HepG2 (cell line): ENCODE measurements at regions of chr6 and their contacts with region 1.

Region 1: DNA sequence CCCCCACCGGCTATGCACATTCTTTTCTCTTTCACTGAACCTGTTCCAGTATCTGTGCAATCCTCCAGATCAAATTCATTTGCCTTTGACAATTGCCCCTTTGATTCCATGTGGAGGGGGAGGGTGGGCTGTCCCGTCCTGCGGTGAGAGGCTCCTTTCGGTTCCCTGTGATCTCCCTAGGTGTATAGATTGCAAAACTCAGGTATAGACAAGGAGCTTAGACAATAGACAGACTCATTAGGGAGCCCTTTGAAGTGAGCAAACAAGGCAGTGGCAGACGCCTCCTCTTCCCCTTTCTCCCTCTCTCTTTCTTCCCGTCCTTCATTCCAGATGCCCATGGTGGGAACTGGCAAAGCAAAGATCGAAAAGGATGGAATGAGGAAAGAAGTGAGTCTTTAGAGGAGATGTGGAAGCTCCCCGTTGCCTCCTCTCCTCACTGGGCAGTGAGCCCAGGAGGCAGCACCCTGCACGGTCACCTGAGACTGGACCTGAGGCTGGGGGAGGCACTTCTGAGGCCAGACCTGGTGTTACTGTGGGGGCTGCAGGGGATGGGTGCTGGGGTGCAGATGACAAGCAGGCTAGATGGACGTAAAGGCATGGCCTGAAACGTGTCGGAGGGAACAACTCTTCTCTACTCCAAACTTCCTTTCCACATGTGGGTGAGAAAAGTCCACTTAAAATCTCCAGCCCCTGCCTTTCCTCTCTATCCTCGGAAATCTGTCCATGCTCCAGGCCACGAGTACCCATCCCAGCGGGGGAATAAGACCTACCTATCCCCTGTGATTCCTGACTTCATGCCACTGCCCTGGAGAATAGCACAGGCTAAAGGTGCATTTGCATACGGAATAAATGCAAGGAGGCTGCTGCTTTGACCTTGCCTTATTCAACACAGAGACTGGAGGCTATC is 256.6 kb upstream of the FOXQ1 start:
- DNase-seq: peak; percentile 100
- ATAC-seq: peak; percentile 80
- H3K4me3 ChIP-seq: peak overlapping the region; percentile 33 to 70 (median 42)
- H3K27ac ChIP-seq: peak overlapping the region; percentile 92
- H3K4me1 ChIP-seq: peaks cover 55% of the 10 kb centered on the region
- H3K27me3 ChIP-seq: no peaks in the 10 kb centered on the region
- CTCF ChIP-seq: no peak
- EP300 ChIP-seq: peak; percentile 99 to 100
- POLR2A ChIP-seq: peak; percentile 59 to 71
- RAD21 ChIP-seq: peak; percentile 27; the same call in 1 of the 2 replicates

Region 2: GRCh38 chr6:373751-374724 is 681.2 kb before region 1 on chr6:
- CTCF ChIA-PET with region 1: no interaction called
- POLR2A ChIA-PET with region 1: no interaction called
- in situ Hi-C with region 1: no loop called
- intact Hi-C with region 1: no loop called
- DNase-seq: no peak
- ATAC-seq: no peak
- H3K4me3 ChIP-seq: no peak overlapping the region
- H3K27ac ChIP-seq: no peak overlapping the region
- H3K4me1 ChIP-seq: no peaks in the 10 kb centered on the region
- H3K27me3 ChIP-seq: peaks cover 8 to 79% of the 10 kb centered on the region in 2 experiments; a peak in 3 of 5 replicates
- CTCF ChIP-seq: 0 out of 2 replicates have a peak, but pooled peaks have one; percentile 4
- EP300 ChIP-seq: no peak
- POLR2A ChIP-seq: no peak
- RAD21 ChIP-seq: no peak

Region 3: DNA sequence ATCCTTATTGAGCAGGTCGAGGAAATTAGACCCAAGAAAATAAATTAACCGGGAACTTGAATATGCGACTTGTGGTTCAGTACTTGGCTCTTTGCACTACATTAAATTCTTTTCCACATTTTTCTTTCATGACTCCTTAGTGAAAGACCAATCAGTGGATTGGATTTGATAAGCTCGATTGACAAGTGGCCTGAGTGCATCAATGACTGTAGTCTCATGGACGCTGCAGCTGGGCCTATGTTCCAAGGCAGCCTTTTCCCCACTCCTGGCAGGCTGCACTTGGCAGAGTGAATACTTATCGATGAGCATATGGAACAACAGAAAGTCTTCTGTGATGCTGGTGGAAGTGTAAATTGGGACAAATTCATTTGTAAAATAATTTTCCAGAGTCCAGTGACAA is 151.5 kb before region 1 on chr6:
- CTCF ChIA-PET with region 1: no interaction called
- POLR2A ChIA-PET with region 1: interaction called, 23 read pairs
- in situ Hi-C with region 1: no loop called
- intact Hi-C with region 1: no loop called
- DNase-seq: no peak
- ATAC-seq: no peak
- H3K4me3 ChIP-seq: no peak overlapping the region
- H3K27ac ChIP-seq: no peak overlapping the region
- H3K4me1 ChIP-seq: peaks cover 30% of the 10 kb centered on the region
- H3K27me3 ChIP-seq: peaks cover 2 to 15% of the 10 kb centered on the region in 2 experiments; a peak in 2 of 5 replicates
- CTCF ChIP-seq: no peak
- EP300 ChIP-seq: no peak
- POLR2A ChIP-seq: no peak
- RAD21 ChIP-seq: no peak

Region 4: GRCh38 chr6:1044040-1044836 is 11.0 kb before region 1 on chr6:
- CTCF ChIA-PET with region 1: no interaction called
- POLR2A ChIA-PET with region 1: interaction called, 22 read pairs
- in situ Hi-C with region 1: no loop called
- intact Hi-C with region 1: no loop called
- DNase-seq: peak; percentile 89
- ATAC-seq: peak; percentile 80
- H3K4me3 ChIP-seq: no peak overlapping the region
- H3K27ac ChIP-seq: peak overlapping the region; percentile 48
- H3K4me1 ChIP-seq: peaks cover 66% of the 10 kb centered on the region
- H3K27me3 ChIP-seq: no peaks in the 10 kb centered on the region
- CTCF ChIP-seq: peak; percentile 44
- EP300 ChIP-seq: peak in 1 of 2 experiments; percentile 78; a peak in 2 of 4 replicates
- POLR2A ChIP-seq: no peak
- RAD21 ChIP-seq: no peak

Region 5: DNA sequence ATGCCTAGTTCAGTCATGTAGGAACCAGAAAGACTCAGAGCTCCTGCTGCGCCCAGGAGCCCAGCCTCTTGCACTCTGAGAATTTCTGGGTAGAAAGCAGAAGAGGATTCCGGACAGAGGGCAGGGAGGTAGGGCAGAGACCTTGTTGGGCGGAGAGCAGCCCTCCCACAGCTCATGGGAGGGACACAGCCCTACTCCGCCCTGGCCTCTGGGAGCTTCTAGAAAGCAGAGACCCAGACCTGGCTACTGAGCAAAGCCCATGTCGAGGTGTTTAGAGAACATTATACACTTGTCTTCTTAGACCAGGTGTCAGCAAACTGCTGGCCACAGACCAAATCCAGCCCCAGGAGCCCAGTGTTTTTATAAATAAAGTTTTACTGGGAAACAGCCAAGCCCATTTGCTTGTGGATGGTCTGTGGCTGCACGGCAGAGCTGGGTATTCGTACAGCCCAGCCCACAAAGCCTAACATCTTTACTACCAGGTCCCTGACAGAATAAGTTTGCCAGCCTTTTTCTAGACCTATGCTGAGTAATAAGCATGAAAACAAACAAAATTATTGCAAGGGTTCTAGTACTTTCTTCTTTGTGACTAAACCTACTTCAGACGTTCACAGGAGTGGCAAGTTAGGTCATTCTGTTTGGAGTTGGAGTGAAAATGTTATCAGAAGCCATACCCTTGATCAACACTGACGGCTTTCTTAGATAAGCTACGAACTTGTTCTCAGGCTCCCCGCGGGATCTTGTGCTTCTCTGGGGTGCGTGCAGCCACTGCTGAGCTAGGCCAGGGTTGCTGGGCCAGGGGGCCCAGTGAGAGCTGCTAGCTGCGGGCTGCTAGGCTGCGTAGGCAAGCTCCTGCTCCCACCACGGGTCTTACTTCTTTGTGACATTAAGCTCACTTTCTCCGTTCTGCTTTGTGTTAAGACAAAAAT is 21.5 kb after region 1 on chr6:
- CTCF ChIA-PET with region 1: no interaction called
- POLR2A ChIA-PET with region 1: interaction called, 23 read pairs
- in situ Hi-C with region 1: no loop called
- intact Hi-C with region 1: loop called (anchors 2 kb)
- DNase-seq: no peak
- ATAC-seq: no peak; the same call in 2 of the 3 replicates
- H3K4me3 ChIP-seq: no peak overlapping the region
- H3K27ac ChIP-seq: peak overlapping the region; percentile 65
- H3K4me1 ChIP-seq: peaks cover 50% of the 10 kb centered on the region
- H3K27me3 ChIP-seq: no peaks in the 10 kb centered on the region
- CTCF ChIP-seq: no peak
- EP300 ChIP-seq: no peak
- POLR2A ChIP-seq: no peak
- RAD21 ChIP-seq: no peak

Region 6: DNA sequence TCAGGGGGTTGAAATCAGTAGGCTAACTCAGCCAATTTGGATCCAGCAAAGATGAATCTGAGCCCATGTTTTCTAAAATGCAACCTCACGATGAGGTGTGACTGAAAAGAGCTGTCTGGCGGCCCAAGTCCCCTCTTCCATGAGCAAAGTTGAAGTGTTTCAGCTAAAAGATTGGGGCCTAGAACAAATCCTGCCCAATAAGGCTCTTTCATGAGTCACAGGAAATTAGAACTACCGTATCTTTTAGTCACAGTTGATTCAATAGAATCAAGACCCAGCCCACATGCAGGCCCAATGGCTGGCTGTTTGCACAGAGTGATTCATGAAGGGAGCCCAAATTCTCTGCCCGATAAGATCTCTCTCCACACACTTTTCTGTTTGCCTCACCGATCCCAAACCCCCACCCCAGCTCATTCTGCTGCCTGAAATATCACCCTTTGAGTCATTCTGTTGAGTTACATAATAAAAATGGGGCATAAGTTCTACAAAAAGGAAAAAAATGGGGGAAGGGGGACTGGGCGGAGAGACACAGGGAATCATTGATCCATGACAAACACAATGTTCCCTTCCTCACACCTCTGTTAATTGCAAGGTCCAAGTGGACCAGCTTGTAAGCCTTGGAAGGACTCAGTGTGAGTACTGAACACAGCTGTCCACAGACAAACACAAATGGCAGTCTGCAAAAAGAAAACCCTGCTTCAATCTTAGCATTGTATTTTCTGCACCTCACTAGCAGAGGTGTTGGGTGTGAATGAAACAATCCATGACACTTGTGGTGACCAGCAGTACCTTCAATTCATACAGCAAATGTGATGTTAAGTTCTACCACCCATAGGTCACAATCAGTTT is 270.4 kb after region 1 on chr6:
- CTCF ChIA-PET with region 1: no interaction called
- POLR2A ChIA-PET with region 1: interaction called, 39 read pairs
- in situ Hi-C with region 1: no loop called
- intact Hi-C with region 1: loop called (anchors 5 kb)
- DNase-seq: peak; percentile 99
- ATAC-seq: peak; percentile 85
- H3K4me3 ChIP-seq: peak overlapping the region; percentile 6 to 34 (median 14); a peak in 2 of 6 replicates
- H3K27ac ChIP-seq: peak overlapping the region; percentile 70
- H3K4me1 ChIP-seq: peaks cover 77% of the 10 kb centered on the region
- H3K27me3 ChIP-seq: no peaks in the 10 kb centered on the region
- CTCF ChIP-seq: no peak
- EP300 ChIP-seq: peak; percentile 81 to 94; a peak in 3 of 4 replicates
- POLR2A ChIP-seq: peak in 1 of 2 experiments; percentile 51; a peak in 1 of 4 replicates
- RAD21 ChIP-seq: no peak